CD8-positive, alpha-beta memory T cell (primary cell): ENCODE measurements at regions of chr12 and their contacts with region 1.

Region 1: GRCh38 chr12:89019408-89020120 is 332.7 kb downstream of the DUSP6 start:
- DNase-seq: peak; percentile 46 to 75 (median 60)
- H3K4me3 ChIP-seq: no peak overlapping the region
- H3K4me3 Mint-ChIP-seq: no peak overlapping the region
- H3K27ac ChIP-seq: no peak overlapping the region
- H3K27ac Mint-ChIP-seq: no peak overlapping the region
- H3K4me1 ChIP-seq: peaks cover 5% of the 10 kb centered on the region
- H3K4me1 Mint-ChIP-seq: peaks cover 2 to 4% (median 3%) of the 10 kb centered on the region in 3 donors
- H3K27me3 ChIP-seq: no peaks in the 10 kb centered on the region
- H3K27me3 Mint-ChIP-seq: peaks cover 8 to 14% of the 10 kb centered on the region in 2 donors

Region 2: DNA sequence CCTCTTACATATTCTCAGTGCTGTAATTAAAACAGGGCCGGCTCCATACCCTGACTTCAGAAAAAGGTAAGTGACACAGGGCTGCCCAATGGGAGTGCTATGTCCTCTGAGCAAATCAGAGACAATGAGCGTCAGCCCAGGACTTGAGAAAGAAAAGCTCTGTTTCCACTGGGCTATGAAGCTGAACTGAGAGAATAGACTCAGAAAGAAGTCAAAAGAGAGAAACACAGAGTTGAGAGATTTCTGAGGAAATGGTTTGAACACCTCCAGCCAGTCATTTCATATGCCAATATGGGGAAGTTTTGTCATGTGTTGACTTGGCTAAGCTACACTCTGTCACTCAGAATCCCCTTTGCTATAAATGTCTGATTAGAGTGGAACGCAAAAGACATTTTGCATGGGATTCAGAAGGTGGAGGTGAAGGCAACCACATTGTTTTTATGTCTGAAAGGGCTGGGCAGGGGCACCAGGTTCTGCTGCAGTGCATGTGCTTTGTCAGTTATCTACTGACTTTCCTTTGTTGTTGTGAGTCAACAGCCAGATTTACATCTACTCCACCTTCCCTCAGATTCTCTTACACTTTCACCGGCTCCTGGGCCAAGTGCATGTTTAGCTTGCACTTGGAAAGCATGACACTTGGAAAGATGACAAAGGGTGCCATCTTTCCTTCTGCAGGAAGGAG is 19.4 kb after region 1 on chr12:
- CTCF ChIA-PET with region 1: interaction called, 11 read pairs
- POLR2A ChIA-PET with region 1: no interaction called
- DNase-seq: no peak
- H3K4me3 ChIP-seq: no peak overlapping the region
- H3K4me3 Mint-ChIP-seq: no peak overlapping the region
- H3K27ac ChIP-seq: no peak overlapping the region
- H3K27ac Mint-ChIP-seq: peak overlapping the region in 1 of 8 donors; percentile 80
- H3K4me1 ChIP-seq: peaks cover 24% of the 10 kb centered on the region
- H3K4me1 Mint-ChIP-seq: peaks cover 24 to 31% (median 26%) of the 10 kb centered on the region in 3 donors
- H3K27me3 ChIP-seq: no peaks in the 10 kb centered on the region
- H3K27me3 Mint-ChIP-seq: peaks cover 0 to 3% of the 10 kb centered on the region in 2 donors

Region 3: GRCh38 chr12:89461649-89462612 is 442.4 kb after region 1 on chr12:
- CTCF ChIA-PET with region 1: interaction called, 44 read pairs
- POLR2A ChIA-PET with region 1: no interaction called
- DNase-seq: peak in 2 of 5 donors; percentile 46 to 55
- H3K4me3 ChIP-seq: no peak overlapping the region
- H3K4me3 Mint-ChIP-seq: peak overlapping the region in 6 of 7 donors; percentile 14 to 71 (median 60)
- H3K27ac ChIP-seq: no peak overlapping the region
- H3K27ac Mint-ChIP-seq: peak overlapping the region in 6 of 8 donors; percentile 2 to 88 (median 72)
- H3K4me1 ChIP-seq: no peaks in the 10 kb centered on the region
- H3K4me1 Mint-ChIP-seq: peaks cover 23 to 35% (median 28%) of the 10 kb centered on the region in 3 donors
- H3K27me3 ChIP-seq: no peaks in the 10 kb centered on the region
- H3K27me3 Mint-ChIP-seq: no peaks in the 10 kb centered on the region

Region 4: GRCh38 chr12:89470741-89471509 is 451.4 kb after region 1 on chr12:
- CTCF ChIA-PET with region 1: interaction called, 12 read pairs
- POLR2A ChIA-PET with region 1: no interaction called
- DNase-seq: peak in 2 of 5 donors; percentile 33 to 37
- H3K4me3 ChIP-seq: no peak overlapping the region
- H3K4me3 Mint-ChIP-seq: peak overlapping the region in 1 of 7 donors; percentile 52
- H3K27ac ChIP-seq: no peak overlapping the region
- H3K27ac Mint-ChIP-seq: peak overlapping the region; percentile 39 to 95 (median 76)
- H3K4me1 ChIP-seq: peaks cover 32% of the 10 kb centered on the region
- H3K4me1 Mint-ChIP-seq: peaks cover 60 to 64% (median 62%) of the 10 kb centered on the region in 3 donors
- H3K27me3 ChIP-seq: no peaks in the 10 kb centered on the region
- H3K27me3 Mint-ChIP-seq: no peaks in the 10 kb centered on the region

Region 5: DNA sequence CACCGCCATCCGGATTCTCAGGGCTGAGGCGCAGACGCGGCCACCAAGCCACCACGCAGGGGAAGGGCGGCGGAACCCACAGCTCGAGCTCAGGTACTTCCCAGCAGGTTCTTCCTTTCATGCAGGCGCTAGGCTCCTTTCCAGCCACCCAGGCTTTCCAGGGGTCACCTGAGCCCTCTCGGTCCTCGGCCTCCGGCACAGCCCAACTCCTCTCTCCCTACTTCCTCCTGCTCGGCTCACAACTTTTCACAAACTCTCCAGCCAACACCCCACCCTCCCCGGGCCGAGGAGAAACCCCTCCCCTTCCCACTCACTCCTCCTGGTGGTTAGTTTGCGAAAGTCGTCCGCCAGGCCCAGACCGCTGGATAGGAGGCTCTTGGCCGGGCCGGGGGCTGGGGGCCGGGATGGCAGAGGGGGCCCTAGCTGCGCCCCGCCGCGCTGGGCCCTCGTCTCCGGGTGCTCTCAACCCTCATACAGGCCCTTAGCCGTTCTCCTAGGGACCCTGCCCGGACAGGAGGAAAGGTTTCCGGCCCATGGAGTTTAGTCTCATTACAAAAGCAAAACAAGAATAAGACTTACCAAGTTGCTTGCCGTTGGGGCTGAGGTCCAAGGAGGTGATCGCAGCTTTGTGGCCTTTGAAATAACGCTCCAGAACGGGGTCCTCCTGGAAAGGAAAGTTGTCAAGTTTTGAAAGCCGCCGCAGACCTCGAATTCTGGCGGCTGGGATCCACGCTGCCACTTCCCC is 505.1 kb after region 1 on chr12 and contains the start of gene GALNT4:
- CTCF ChIA-PET with region 1: interaction called, 16 read pairs
- POLR2A ChIA-PET with region 1: interaction called, 3 read pairs
- DNase-seq: peak; percentile 53 to 84 (median 73)
- H3K4me3 ChIP-seq: peak within 1 kb of the TSS; percentile 87
- H3K4me3 Mint-ChIP-seq: peak within 1 kb of the TSS; percentile 92 to 99 (median 96)
- H3K27ac ChIP-seq: peak within 1 kb of the TSS; percentile 84
- H3K27ac Mint-ChIP-seq: peak within 1 kb of the TSS; percentile 85 to 98 (median 94)
- H3K4me1 ChIP-seq: peaks cover 40% of the 10 kb centered on the region
- H3K4me1 Mint-ChIP-seq: peaks cover 55 to 68% (median 65%) of the 10 kb centered on the region in 3 donors
- H3K27me3 ChIP-seq: no peaks in the 10 kb centered on the region
- H3K27me3 Mint-ChIP-seq: no peaks in the 10 kb centered on the region
- total RNA-seq, gene GALNT4: 5.8 to 6.5 TPM

Region 6: DNA sequence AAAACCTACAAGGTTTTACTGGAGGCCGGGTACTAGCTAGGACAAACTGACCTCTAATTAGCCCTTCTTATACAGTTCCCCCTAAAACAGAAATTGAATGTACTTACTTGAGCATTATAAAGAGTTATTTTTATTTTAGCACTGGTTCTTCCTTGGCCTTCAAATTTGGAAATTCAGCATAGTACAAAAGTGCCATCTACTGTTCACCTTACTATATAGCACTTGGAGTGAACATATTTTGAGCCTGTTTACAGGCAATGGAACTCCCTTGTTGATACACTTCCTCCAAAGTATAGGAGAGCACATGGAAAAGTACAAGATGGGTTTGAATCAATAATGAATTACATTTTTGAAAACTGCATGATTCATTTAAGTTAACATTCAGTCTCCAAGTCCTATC is 510.2 kb after region 1 on chr12:
- CTCF ChIA-PET with region 1: interaction called, 16 read pairs
- POLR2A ChIA-PET with region 1: interaction called, 3 read pairs
- DNase-seq: peak in 2 of 5 donors; percentile 45 to 52
- H3K4me3 ChIP-seq: no peak overlapping the region
- H3K4me3 Mint-ChIP-seq: peak overlapping the region in 1 of 7 donors; percentile 42
- H3K27ac ChIP-seq: no peak overlapping the region
- H3K27ac Mint-ChIP-seq: peak overlapping the region in 4 of 8 donors; percentile 24 to 64 (median 52)
- H3K4me1 ChIP-seq: peaks cover 7% of the 10 kb centered on the region
- H3K4me1 Mint-ChIP-seq: peaks cover 20 to 25% (median 22%) of the 10 kb centered on the region in 3 donors
- H3K27me3 ChIP-seq: no peaks in the 10 kb centered on the region
- H3K27me3 Mint-ChIP-seq: no peaks in the 10 kb centered on the region